ENCODE measurements at regions of chr9 and their contacts with region 1.

Region 1: GRCh38 chr9:16367605-16368231 is 502.8 kb downstream of the BNC2 start:
- DNase-seq: peak; percentile 80
- ATAC-seq: peak; percentile 71
- H3K4me3 ChIP-seq: no peak overlapping the region
- H3K27ac ChIP-seq: peak overlapping the region; percentile 69
- H3K4me1 ChIP-seq: peaks cover 10% of the 10 kb centered on the region
- H3K27me3 ChIP-seq: no peaks in the 10 kb centered on the region
- CTCF ChIP-seq: no peak
- POLR2A ChIP-seq: no peak
- RAD21 ChIP-seq: no peak

Region 2: GRCh38 chr9:15722888-15723287 is 644.8 kb before region 1 on chr9:
- CTCF ChIA-PET with region 1: no interaction called
- POLR2A ChIA-PET with region 1: interaction called, 10 read pairs
- dilution Hi-C with region 1: no loop called
- in situ Hi-C with region 1: no loop called
- intact Hi-C with region 1: no loop called
- DNase-seq: peak; percentile 31
- ATAC-seq: peak; percentile 21; the same call in 1 of the 2 replicates
- H3K4me3 ChIP-seq: no peak overlapping the region
- H3K27ac ChIP-seq: no peak overlapping the region
- H3K4me1 ChIP-seq: peaks cover 4% of the 10 kb centered on the region; the same call in 1 of the 2 replicates
- H3K27me3 ChIP-seq: no peaks in the 10 kb centered on the region
- CTCF ChIP-seq: no peak
- POLR2A ChIP-seq: no peak
- RAD21 ChIP-seq: no peak

Region 3: DNA sequence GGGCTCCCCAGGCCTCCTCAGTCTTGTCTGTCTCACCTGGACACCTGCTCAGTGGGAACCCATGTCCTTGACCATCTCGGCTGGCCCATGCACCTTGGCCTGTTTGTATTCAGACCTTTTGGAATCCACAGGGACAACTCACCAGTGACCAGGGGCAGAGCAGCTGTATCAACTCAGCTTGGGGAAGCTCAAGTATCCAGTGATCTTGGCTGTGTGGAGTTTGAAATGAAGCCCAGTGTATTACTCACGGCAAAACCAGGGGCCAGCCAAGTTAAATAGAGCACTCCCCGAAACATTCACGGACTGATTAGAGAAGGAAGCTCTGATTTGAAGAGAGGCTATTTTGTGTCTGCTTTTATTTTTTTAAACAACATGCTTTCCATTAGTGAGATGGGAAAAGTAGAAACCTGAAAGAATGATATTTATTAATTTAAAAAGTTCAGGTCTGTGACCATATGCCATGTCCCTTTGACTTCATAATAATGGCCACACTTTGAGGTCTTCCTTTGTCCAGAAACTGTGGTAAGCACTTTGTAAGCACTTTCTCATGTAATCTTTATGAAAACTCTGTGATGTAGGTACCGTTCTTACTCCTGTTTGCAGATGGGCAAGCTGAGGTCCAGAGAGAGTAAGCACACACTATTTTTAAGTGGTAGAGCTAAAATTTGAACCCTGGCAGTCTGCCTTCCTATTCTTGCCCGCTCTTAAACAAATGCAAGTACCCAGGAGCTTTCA is 153.8 kb before region 1 on chr9:
- CTCF ChIA-PET with region 1: no interaction called
- POLR2A ChIA-PET with region 1: no interaction called
- dilution Hi-C with region 1: no loop called
- in situ Hi-C with region 1: no loop called
- intact Hi-C with region 1: no loop called
- DNase-seq: peak; percentile 99
- ATAC-seq: peak; percentile 93
- H3K4me3 ChIP-seq: no peak overlapping the region
- H3K27ac ChIP-seq: peak overlapping the region; percentile 76; the same call in 1 of the 2 replicates
- H3K4me1 ChIP-seq: peaks cover 18% of the 10 kb centered on the region
- H3K27me3 ChIP-seq: no peaks in the 10 kb centered on the region
- CTCF ChIP-seq: no peak
- POLR2A ChIP-seq: no peak
- RAD21 ChIP-seq: no peak

Region 4: GRCh38 chr9:16385590-16385989 is 17.9 kb after region 1 on chr9:
- CTCF ChIA-PET with region 1: no interaction called
- POLR2A ChIA-PET with region 1: no interaction called
- dilution Hi-C with region 1: no loop called
- in situ Hi-C with region 1: no loop called
- intact Hi-C with region 1: no loop called
- DNase-seq: peak; percentile 80
- ATAC-seq: peak; percentile 54
- H3K4me3 ChIP-seq: no peak overlapping the region
- H3K27ac ChIP-seq: peak overlapping the region; percentile 79
- H3K4me1 ChIP-seq: peaks cover 5% of the 10 kb centered on the region
- H3K27me3 ChIP-seq: no peaks in the 10 kb centered on the region
- CTCF ChIP-seq: no peak
- POLR2A ChIP-seq: no peak
- RAD21 ChIP-seq: no peak

Measured in IMR-90 (cell line).